Kidney (tissue), 22 donors: ENCODE measurements at regions of chr3 and their contacts with region 1.

Region 1: DNA sequence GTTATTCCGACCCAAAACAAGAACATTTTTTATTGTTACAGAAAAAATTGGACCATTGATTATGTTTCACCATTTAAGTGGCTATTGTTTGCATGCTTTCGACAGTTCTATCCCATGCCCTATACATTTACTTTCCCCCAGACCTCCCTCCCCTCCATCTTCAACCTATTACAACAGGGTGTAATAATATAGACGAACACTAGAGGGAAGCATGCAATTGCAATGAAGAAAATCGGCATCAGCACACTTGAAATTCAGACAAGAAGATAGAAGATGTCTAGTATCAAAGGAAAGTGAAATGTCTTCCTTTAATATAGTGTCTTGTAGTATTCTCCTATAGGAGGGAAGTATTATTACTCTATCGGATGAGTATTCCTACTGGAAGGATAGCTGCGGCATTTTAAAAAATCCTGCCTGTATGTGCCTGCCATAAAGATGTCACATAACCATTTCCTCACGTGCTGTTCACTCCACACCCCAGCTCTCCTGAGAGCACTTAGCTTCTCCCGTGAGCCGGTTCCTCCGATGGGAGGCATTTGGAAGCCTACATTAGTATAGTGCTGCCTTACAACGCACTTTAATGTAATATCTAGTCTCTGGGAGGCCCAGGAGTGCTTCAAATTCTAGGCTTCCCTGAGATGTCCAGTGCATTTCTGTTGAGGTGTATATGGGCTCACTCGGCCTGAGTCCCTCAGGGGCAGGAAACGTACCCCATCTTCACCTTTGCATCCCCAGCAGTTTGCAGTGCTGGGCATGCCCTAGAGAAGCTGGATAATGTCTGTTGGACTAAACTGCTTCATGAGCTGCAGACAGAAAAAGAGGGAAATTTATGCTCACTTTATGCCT is 17.8 kb upstream of the ERICH6 start:
- DNase-seq: peak in 2 of 5 donors; percentile 76 to 77
- H3K4me3 ChIP-seq: no peak overlapping the region
- H3K27ac ChIP-seq: no peak overlapping the region
- H3K4me1 ChIP-seq: peaks cover 0 to 3% (median 0%) of the 10 kb centered on the region in 3 donors
- H3K27me3 ChIP-seq: no peaks in the 10 kb centered on the region
- CTCF ChIP-seq: peak; percentile 75

Region 2: GRCh38 chr3:150861851-150862250 is 140.3 kb after region 1 on chr3:
- intact Hi-C with region 1: loop called (anchors 5 kb)
- DNase-seq: no peak
- H3K4me3 ChIP-seq: no peak overlapping the region
- H3K27ac ChIP-seq: no peak overlapping the region
- H3K4me1 ChIP-seq: no peaks in the 10 kb centered on the region
- H3K27me3 ChIP-seq: no peaks in the 10 kb centered on the region
- CTCF ChIP-seq: no peak

Region 3: GRCh38 chr3:151156618-151157216 is 435.2 kb after region 1 on chr3:
- intact Hi-C with region 1: loop called (anchors 10 kb)
- DNase-seq: peak in 2 of 5 donors; percentile 62 to 79
- H3K4me3 ChIP-seq: no peak overlapping the region
- H3K27ac ChIP-seq: no peak overlapping the region
- H3K4me1 ChIP-seq: no peaks in the 10 kb centered on the region
- H3K27me3 ChIP-seq: no peaks in the 10 kb centered on the region
- CTCF ChIP-seq: peak; percentile 17